ENCODE measurements at regions of chr19 and their contacts with region 1.

Region 1: DNA sequence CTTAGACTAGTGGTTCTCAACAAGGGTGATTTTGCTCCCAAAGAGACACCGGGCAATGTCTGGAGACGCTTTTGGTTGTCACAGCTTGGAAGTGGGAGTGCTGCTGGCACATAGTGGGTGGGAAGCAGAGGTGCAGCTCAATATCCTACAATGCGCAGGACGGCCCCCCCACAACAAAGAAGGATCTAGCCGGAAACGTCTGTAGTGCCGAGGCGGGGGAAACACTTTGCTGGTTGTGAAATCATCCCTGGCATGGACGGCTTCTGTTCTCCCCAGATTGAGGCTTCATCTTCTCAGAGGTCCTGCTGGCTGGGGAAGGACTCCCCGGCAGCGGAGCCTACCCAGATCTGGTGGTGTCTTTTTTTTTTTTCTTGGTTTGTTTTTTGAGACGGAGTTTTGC is 13.4 kb upstream of the SYT5 start:
- DNase-seq: peak in 1 of 5 donors; percentile 19
- ATAC-seq: no peak
- H3K4me3 ChIP-seq: no peak overlapping the region
- H3K27ac ChIP-seq: no peak overlapping the region
- H3K4me1 ChIP-seq: peaks cover 0 to 7% (median 0%) of the 10 kb centered on the region in 12 donors
- H3K27me3 ChIP-seq: no peaks in the 10 kb centered on the region
- CTCF ChIP-seq: no peak
- POLR2A ChIP-seq: no peak

Region 2: DNA sequence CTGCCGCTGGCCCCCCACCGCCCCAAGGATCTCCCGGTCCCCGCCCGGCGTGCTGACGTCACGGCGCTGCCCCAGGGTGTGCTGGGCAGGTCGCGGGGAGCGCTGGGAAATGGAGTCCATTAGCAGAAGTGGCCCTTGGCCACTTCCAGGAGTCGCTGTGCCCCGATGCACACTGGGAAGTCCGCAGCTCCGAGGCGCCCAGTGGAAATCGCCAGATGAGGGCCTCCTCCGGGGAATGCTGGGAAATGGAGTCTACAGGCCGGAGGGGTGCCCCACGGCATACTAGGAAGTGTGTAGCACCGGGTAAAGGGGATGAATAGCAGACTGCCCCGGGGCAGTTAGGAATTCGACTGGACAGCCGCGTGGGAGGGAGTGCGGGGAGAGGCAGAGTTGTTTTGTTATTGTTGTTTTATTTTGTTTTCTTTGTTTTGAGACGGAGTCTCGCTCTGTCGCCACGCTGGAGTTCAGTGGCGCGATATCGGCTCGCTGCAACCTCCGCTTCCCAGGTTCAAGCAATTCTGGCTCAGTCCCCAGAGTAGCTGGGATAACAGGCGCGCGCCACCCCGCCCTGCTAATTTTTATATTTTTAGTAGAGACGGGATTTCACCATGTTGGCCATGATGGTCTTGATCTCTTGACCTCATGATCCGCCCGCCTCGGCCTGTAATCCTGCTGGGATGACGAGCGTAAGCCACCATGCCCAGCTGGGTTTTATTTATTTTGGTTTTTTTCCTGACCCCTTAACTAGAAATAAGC is 75.7 kb before region 1 on chr19 and contains the start of gene PPP1R12C:
- intact Hi-C with region 1: no loop called
- DNase-seq: peak; percentile 99 to 100 (median 99)
- ATAC-seq: peak; percentile 80 to 86 (median 84)
- H3K4me3 ChIP-seq: peak within 1 kb of the TSS; percentile 66 to 98 (median 90)
- H3K27ac ChIP-seq: peak within 1 kb of the TSS; percentile 90 to 99 (median 96)
- H3K4me1 ChIP-seq: peaks cover 5 to 50% (median 36%) of the 10 kb centered on the region in 12 donors
- H3K27me3 ChIP-seq: no peaks in the 10 kb centered on the region
- CTCF ChIP-seq: peak in 1 of 12 donors; percentile 19
- POLR2A ChIP-seq: peak in 1 of 2 donors; percentile 68
- total RNA-seq, gene PPP1R12C: 116 to 324 (median 209) TPM

Region 3: GRCh38 chr19:55166530-55167268 is 26.8 kb before region 1 on chr19 and contains the start of gene DNAAF3:
- intact Hi-C with region 1: no loop called
- DNase-seq: peak; percentile 93 to 97 (median 94)
- ATAC-seq: peak; percentile 98 to 99 (median 98)
- H3K4me3 ChIP-seq: peak within 1 kb of the TSS in 11 of 12 donors; percentile 16 to 59 (median 46)
- H3K27ac ChIP-seq: peak within 1 kb of the TSS in 3 of 12 donors; percentile 5 to 24 (median 22)
- H3K4me1 ChIP-seq: peaks cover 0 to 19% (median 7%) of the 10 kb centered on the region in 12 donors
- H3K27me3 ChIP-seq: peaks cover 7 to 85% (median 48%) of the 10 kb centered on the region in 9 donors
- CTCF ChIP-seq: no peak
- POLR2A ChIP-seq: peak in 1 of 2 donors; percentile 18
- total RNA-seq, gene DNAAF3: 0.56 to 5.7 (median 2.1) TPM

Region 4: DNA sequence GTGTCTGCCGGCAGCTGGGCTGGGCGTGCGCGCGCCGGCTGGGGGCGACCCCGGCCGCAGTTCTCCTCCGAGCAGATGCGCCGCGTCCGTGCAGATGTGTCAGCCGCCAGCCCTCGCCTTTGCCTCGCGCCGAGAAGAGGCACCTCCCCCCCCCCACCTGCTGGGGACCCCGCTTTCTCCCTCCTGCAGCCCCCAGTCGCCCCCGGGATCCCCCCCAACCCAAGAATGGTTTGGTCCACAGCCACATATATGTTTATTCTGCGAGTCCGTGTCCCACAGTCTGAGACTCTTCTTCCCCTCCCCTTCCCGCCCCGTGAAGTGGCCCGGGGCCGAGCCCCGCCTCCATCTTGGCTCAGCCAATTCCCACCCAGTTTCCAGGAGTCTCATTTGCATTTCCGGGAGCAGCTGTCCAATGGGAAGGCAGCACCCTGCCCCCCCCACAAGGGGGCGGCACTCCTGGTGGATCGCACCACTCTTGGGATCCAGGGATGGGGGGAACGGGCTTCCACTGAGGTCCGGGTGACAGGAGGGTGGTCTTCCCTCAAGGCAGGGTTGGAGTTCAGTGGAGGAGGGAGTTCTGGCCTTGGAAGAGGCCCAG is 259.4 kb after region 1 on chr19:
- intact Hi-C with region 1: loop called in 1 of 10 experiments (anchors 5 kb)
- DNase-seq: peak; percentile 65 to 85 (median 72)
- ATAC-seq: peak; percentile 47 to 89 (median 78)
- H3K4me3 ChIP-seq: peak overlapping the region in 2 of 12 donors; percentile 21 to 29
- H3K27ac ChIP-seq: no peak overlapping the region
- H3K4me1 ChIP-seq: peaks cover 0 to 23% (median 11%) of the 10 kb centered on the region in 12 donors
- H3K27me3 ChIP-seq: peaks cover 14 to 35% (median 21%) of the 10 kb centered on the region in 9 donors
- CTCF ChIP-seq: peak in 2 of 12 donors; percentile 10 to 22
- POLR2A ChIP-seq: no peak

Measured in heart left ventricle (tissue), 16 donors.